ENCODE measurements at regions of chr4 and their contacts with region 1.

Region 1: GRCh38 chr4:184474263-184475095 is at the start of gene IRF2:
- DNase-seq: peak; percentile 99
- H3K4me3 Mint-ChIP-seq: peak within 1 kb of the TSS; percentile 99
- H3K27ac Mint-ChIP-seq: peak within 1 kb of the TSS; percentile 100
- H3K4me1 Mint-ChIP-seq: peaks cover 57% of the 10 kb centered on the region
- H3K27me3 Mint-ChIP-seq: no peaks in the 10 kb centered on the region
- total RNA-seq, gene IRF2: 48.1 to 50.9 TPM

Region 2: DNA sequence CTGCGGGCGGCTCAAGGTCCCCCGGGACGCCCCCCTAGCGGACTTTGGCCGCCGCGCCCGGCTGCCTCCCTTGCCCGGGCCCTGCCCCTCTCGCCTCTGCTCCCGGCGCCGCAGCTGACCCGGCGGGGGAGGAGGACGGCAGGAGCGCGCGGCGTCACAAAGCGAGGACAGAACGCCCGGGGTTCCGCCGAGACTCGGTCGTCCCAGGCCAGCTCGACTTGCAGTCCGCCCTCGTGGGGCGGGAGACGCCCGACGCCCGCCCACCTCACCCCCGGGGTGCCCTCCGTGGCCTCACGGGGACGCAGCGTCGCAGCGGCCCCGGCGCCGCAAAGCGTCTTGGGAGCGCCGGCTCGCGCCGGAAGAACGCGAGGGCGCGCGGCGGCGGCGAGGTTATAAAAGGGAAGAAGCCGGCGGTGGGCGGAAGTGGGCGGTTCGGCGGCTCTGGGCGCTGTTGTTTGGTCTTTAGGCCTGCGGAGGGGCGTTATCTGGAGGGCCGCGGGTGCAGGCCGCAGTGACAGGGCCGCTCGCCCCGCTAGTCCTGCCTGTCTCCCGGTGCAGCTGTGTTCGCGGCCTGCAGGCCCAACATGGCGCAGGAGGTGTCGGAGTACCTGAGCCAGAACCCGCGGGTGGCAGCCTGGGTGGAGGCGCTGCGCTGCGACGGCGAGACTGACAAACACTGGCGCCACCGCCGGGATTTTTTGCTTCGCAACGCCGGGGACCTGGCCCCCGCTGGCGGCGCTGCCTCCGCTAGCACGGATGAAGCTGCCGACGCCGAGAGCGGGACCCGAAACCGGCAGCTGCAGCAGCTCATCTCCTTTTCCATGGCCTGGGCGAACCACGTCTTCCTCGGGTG is 1030.0 kb before region 1 on chr4 and contains the start of gene CDKN2AIP:
- CTCF ChIA-PET with region 1: no interaction called
- POLR2A ChIA-PET with region 1: no interaction called
- intact Hi-C with region 1: loop called (anchors 5 kb)
- DNase-seq: peak; percentile 95
- H3K4me3 Mint-ChIP-seq: peak within 1 kb of the TSS; percentile 96
- H3K27ac Mint-ChIP-seq: peak within 1 kb of the TSS; percentile 98
- H3K4me1 Mint-ChIP-seq: peaks cover 41% of the 10 kb centered on the region
- H3K27me3 Mint-ChIP-seq: no peaks in the 10 kb centered on the region
- total RNA-seq, gene CDKN2AIP: 23.0 to 23.7 TPM

Region 3: DNA sequence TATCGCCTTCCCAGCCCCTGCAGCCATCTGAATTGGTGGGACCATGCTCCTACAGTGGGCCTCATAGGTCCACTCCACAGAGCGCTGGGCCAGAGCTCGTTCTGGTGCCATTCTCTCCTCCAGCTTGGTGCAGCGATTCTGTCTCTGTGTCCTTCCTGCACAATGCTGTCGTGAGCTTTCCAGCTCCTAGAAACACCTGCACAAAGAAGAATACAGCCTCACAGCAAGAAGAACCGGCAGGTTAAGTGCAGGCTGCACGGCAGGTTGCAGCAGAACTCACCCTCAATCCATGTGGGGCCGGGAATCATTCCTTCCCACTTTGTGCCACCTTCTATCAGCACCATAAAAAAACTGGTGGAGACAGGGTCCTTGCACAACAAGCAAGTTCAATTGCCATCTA is 155.6 kb before region 1 on chr4:
- CTCF ChIA-PET with region 1: interaction called, 3 read pairs
- POLR2A ChIA-PET with region 1: no interaction called
- intact Hi-C with region 1: loop called (anchors 1 kb)
- DNase-seq: no peak
- H3K4me3 Mint-ChIP-seq: no peak overlapping the region
- H3K27ac Mint-ChIP-seq: no peak overlapping the region
- H3K4me1 Mint-ChIP-seq: peaks cover 34% of the 10 kb centered on the region
- H3K27me3 Mint-ChIP-seq: peaks cover 1% of the 10 kb centered on the region

Region 4: GRCh38 chr4:184457535-184458249 is 16.8 kb before region 1 on chr4:
- CTCF ChIA-PET with region 1: no interaction called
- POLR2A ChIA-PET with region 1: interaction called, 20 read pairs
- intact Hi-C with region 1: loop called (anchors 2 kb)
- DNase-seq: no peak
- H3K4me3 Mint-ChIP-seq: no peak overlapping the region
- H3K27ac Mint-ChIP-seq: no peak overlapping the region
- H3K4me1 Mint-ChIP-seq: peaks cover 74% of the 10 kb centered on the region
- H3K27me3 Mint-ChIP-seq: no peaks in the 10 kb centered on the region

Region 5: DNA sequence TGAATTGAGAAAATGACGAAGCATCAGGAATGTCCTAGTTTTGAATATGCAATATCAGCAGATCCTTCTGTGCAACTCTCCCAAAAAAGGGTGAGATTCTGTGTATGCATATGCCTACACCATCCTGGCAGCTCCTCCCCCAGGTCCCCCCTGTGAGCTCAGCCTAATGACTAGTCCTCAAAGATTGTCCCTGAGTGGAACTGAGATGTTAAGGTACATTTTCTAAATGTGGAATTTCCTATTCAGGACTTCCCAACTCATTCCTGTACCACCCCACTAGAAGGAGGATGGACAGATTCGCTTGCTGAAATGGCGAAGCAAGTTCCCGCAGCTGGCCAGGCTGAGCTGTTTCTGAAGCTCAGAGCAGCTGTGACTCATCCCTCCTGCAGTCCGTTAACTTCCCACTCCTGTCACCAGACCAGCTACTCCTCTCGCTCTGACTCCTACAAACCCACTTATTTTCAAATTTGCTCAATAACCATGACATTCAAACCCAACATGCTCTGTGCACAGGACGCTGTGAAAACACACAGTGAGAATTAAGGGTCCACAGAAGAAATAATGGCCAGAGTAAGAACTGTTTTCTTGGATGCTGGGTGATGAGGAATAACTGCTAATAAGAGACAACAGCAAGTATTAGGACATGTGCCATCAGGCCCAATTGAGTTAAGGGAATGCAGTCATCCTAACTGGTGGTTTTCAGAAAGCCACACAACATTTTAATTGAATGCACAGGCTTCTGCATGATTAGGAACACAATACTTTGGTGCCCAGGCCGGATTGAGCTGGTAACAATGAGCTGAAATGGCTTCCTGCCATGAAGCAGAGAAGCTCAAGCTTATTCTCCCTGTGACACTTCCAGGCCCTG is 39.9 kb after region 1 on chr4:
- CTCF ChIA-PET with region 1: interaction called, 15 read pairs
- POLR2A ChIA-PET with region 1: interaction called, 60 read pairs
- intact Hi-C with region 1: loop called (anchors 1 kb)
- DNase-seq: peak; percentile 90
- H3K4me3 Mint-ChIP-seq: peak overlapping the region; percentile 38
- H3K27ac Mint-ChIP-seq: peak overlapping the region; percentile 88
- H3K4me1 Mint-ChIP-seq: peaks cover 42% of the 10 kb centered on the region
- H3K27me3 Mint-ChIP-seq: no peaks in the 10 kb centered on the region

Region 6: GRCh38 chr4:184649026-184649970 is 174.8 kb after region 1 on chr4 and contains the starts of genes CASP3 and PRIMPOL:
- CTCF ChIA-PET with region 1: interaction called, 3 read pairs
- POLR2A ChIA-PET with region 1: interaction called, 17 read pairs
- intact Hi-C with region 1: loop called (anchors 1 kb)
- DNase-seq: peak; percentile 98
- H3K4me3 Mint-ChIP-seq: peak within 1 kb of the TSS; percentile 91
- H3K27ac Mint-ChIP-seq: peak within 1 kb of the TSS; percentile 91
- H3K4me1 Mint-ChIP-seq: peaks cover 50% of the 10 kb centered on the region
- H3K27me3 Mint-ChIP-seq: no peaks in the 10 kb centered on the region
- total RNA-seq, gene CASP3: 54.0 to 54.4 TPM
- total RNA-seq, gene PRIMPOL: 23.1 to 27.1 TPM

Region 7: DNA sequence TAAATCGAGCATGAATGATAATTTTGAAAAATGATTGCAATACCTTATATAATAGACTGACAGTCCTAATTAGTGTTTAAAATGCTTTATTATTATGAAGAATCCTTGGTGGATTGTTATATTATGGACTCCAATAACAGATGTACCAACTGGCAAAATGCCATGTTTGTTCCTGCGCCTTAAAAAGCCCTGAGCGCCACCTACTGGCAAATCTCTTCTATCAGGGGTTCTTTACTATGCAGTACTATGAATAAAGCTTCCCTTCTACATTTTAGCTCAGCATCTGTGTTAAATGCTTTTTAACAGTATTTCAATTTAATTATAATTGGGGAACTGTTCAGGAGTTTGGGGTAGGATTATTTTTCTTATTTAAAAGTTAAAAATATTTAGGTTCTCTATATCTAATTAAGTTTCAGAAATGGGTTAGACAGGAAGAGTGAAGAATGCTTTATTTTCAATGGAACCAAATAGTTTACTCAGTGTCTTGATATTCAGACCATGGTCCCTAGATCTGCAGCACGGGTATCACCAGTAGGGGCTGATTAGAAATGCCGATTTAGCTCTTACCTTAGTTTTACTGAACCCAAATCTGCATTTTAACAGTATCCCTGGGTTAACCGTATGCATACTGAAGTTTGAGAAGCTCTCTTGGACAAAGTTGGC is 709.3 kb after region 1 on chr4:
- CTCF ChIA-PET with region 1: no interaction called
- POLR2A ChIA-PET with region 1: no interaction called
- intact Hi-C with region 1: no loop called
- DNase-seq: peak; percentile 78
- H3K4me3 Mint-ChIP-seq: no peak overlapping the region
- H3K27ac Mint-ChIP-seq: no peak overlapping the region
- H3K4me1 Mint-ChIP-seq: peaks cover 42% of the 10 kb centered on the region
- H3K27me3 Mint-ChIP-seq: no peaks in the 10 kb centered on the region